ENCODE measurements at regions of chr9 and their contacts with region 1.

Region 1: GRCh38 chr9:125532412-125532811 is 174.6 kb downstream of the MAPKAP1 start:
- DNase-seq: no peak
- ATAC-seq: no peak
- H3K4me3 ChIP-seq: no peak overlapping the region
- H3K4me3 Mint-ChIP-seq: no peak overlapping the region
- H3K27ac ChIP-seq: no peak overlapping the region
- H3K27ac Mint-ChIP-seq: no peak overlapping the region
- H3K4me1 ChIP-seq: peaks cover 2 to 5% of the 10 kb centered on the region in 2 experiments
- H3K4me1 Mint-ChIP-seq: peaks cover 17 to 33% (median 18%) of the 10 kb centered on the region in 3 donors
- H3K27me3 ChIP-seq: no peaks in the 10 kb centered on the region
- H3K27me3 Mint-ChIP-seq: no peaks in the 10 kb centered on the region

Region 2: GRCh38 chr9:125601961-125602360 is 69.5 kb after region 1 on chr9:
- CTCF ChIA-PET with region 1: interaction called in 1 of 2 experiments, 11 read pairs
- POLR2A ChIA-PET with region 1: no interaction called
- DNase-seq: no peak
- ATAC-seq: no peak
- H3K4me3 ChIP-seq: no peak overlapping the region
- H3K4me3 Mint-ChIP-seq: no peak overlapping the region
- H3K27ac ChIP-seq: no peak overlapping the region
- H3K27ac Mint-ChIP-seq: no peak overlapping the region
- H3K4me1 ChIP-seq: peaks cover 2 to 4% of the 10 kb centered on the region in 2 experiments
- H3K4me1 Mint-ChIP-seq: peaks cover 36 to 50% (median 46%) of the 10 kb centered on the region in 3 donors
- H3K27me3 ChIP-seq: no peaks in the 10 kb centered on the region
- H3K27me3 Mint-ChIP-seq: no peaks in the 10 kb centered on the region

Region 3: DNA sequence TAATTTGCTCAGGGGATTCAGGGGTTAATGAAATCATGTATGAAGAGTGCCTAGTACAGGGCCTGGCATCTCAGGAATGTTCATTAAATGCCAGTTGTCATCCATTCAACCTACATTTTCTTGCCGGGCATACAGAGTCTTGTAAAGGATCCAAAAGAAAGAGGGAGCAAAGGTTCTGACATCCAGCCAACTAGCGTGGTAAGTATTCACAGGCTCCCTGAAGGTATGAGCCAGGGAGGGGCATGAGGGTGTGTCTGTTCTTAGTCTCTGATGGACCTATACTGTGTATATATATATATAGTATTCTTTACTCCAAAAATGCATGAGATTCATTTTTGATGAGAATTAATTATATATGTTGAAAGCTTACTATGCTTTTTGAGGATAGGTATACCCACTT is 416.8 kb after region 1 on chr9:
- CTCF ChIA-PET with region 1: no interaction called
- POLR2A ChIA-PET with region 1: no interaction called
- DNase-seq: no peak
- ATAC-seq: no peak
- H3K4me3 ChIP-seq: no peak overlapping the region
- H3K4me3 Mint-ChIP-seq: no peak overlapping the region
- H3K27ac ChIP-seq: no peak overlapping the region
- H3K27ac Mint-ChIP-seq: no peak overlapping the region
- H3K4me1 ChIP-seq: no peaks in the 10 kb centered on the region
- H3K4me1 Mint-ChIP-seq: no peaks in the 10 kb centered on the region
- H3K27me3 ChIP-seq: no peaks in the 10 kb centered on the region
- H3K27me3 Mint-ChIP-seq: no peaks in the 10 kb centered on the region

Measured in T-cell (primary cell).